ENCODE measurements at regions of chr5 and their contacts with region 1.

Region 1: DNA sequence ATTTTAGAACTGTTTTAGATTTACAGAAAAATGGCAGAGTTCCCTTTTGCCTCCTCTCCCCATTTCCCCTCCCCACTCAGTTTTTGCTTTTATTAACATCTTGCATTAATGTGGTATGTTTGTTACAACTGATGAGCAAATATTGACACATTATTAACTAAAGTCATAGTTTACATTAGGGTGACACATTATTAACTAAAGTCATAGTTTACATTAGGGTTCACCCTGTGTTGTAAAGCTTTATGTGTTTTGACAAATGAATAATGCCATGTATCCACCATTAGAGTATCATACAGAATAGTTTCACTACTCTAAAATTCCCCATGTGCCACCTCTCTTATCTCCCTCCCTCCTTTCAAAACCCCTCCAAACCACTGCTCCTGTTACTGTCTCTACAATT is 262.5 kb downstream of the NPR3 start:
- DNase-seq: peak; percentile 68
- ATAC-seq: peak; percentile 93
- H3K4me3 ChIP-seq: peak overlapping the region; percentile 6; the same call in 1 of the 2 replicates
- H3K27ac ChIP-seq: peak overlapping the region; percentile 89
- H3K4me1 ChIP-seq: peaks cover 23% of the 10 kb centered on the region
- H3K27me3 ChIP-seq: no peaks in the 10 kb centered on the region
- CTCF ChIP-seq: no peak

Region 2: DNA sequence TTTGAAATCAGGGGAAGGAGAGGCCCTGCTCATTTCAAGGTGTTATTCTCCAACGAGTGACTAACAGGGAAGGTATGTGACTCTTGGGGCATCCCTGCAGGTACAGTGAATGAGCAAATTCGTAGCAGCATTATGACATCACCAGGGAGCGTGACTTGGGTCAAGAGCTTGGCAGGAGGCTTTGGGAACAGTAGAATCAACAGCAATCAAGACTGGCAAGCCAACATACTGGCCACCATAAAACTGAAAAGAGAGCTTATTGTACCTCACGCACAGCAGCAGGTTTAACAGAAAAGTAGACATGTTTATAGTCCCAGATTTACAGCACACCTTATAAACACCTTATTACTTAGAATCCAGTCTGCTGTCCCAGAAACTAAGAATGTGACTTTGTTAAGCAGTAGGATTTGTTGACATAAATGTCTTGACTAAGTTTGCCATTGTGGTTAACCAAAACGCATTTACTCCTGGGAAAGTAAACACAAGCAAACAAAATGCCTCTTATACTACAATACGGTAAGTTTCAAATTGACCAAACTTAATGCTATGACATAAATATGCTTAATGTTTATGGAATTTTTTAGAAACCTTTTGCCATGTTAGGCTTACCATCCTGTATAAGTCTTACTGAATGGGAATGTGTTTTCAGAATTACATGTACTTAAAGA is 35.2 kb after region 1 on chr5:
- CTCF ChIA-PET with region 1: no interaction called
- POLR2A ChIA-PET with region 1: no interaction called
- intact Hi-C with region 1: loop called (anchors 5 kb)
- DNase-seq: peak; percentile 91
- ATAC-seq: peak; percentile 77
- H3K4me3 ChIP-seq: no peak overlapping the region
- H3K27ac ChIP-seq: peak overlapping the region; percentile 98
- H3K4me1 ChIP-seq: peaks cover 30% of the 10 kb centered on the region
- H3K27me3 ChIP-seq: no peaks in the 10 kb centered on the region
- CTCF ChIP-seq: no peak

Measured in PC-3 (cell line).